Astrocyte of the cerebellum (primary cell): ENCODE measurements at regions of chr16 and their contacts with region 1.

Region 1: DNA sequence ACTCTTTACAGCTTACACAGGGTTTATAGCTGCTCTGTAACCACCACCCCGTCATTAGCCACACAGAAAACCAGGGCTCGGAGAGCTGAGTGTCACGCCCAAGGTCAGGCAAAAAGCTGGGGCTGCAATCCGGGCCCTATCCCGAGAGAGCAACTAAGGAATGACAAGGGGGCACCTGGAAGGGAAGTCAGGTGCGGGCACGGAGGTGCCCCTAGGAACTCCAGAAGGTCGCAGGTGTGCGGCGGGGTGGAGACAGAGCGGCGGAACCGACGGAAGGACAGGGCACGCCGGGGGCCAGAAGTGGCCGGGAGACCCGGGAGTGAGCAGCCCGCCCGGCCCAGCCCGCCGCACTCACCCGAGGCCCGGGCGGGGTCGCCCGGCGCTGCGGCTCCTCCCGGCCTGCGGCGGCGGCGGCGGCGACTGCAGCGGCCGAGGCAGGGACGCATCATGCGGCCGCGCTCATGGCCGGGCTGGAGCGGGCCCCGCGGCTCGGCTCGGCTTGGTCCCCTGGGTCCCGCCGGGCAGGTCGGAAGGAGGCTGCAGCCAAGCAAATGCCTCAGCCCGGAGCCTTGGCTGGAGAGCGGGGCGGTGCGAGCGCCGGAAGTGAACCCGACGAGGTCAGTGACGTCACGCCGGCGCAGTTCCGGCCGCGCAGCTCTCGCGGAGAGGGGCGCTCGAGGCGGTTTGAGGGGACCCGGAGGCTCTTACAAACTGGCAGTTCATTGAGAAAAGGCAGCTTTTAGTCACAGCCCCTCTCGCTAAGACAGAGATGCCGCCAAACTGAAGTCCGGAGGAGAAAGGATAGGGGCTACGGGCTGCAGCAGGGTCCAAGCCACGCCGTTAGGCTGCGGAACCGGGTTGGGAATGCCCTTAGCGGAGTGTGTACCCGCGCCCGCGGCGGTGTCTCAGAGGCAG is at the start of gene ZDHHC7:
- DNase-seq: peak; percentile 53
- H3K4me3 ChIP-seq: peak within 1 kb of the TSS; percentile 97
- CTCF ChIP-seq: no peak

Region 2: DNA sequence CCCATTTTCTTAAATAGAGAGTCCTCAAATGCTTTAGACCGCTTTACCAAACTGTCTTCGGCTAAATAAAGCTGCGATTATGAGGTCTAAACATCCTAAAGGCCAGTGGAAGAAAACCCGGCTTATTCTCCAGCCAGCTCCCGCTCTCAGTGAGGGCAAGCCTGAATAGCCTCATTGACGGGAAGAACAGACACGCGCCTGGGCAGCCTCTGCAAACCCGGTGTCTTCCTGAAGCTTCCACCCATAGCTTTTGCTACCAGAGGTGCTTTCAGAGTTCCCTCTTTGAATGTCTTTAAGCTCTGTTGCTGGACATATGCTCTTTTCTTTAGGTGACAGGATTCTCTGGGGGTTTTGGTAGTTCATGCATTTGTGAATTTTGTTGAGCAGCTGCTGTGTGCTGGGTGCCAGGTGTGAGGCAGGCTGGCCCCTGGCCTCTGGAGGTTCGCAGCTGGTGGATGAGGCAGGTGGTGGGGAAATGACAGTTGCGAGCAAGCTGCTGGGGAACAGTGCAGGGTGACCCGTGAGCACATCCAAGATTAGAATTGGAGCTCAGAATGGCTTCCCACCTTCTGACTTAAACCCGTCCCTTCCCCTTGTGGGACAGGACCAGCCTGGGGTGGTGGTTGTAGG is 146.7 kb before region 1 on chr16:
- in situ Hi-C with region 1: no loop called
- DNase-seq: no peak
- H3K4me3 ChIP-seq: no peak overlapping the region
- CTCF ChIP-seq: no peak

Region 3: GRCh38 chr16:85052536-85052935 is 41.3 kb after region 1 on chr16:
- in situ Hi-C with region 1: loop called (anchors 5 kb)
- DNase-seq: peak; percentile 49
- H3K4me3 ChIP-seq: no peak overlapping the region
- CTCF ChIP-seq: no peak

Region 4: GRCh38 chr16:85082173-85083050 is 71.2 kb after region 1 on chr16:
- in situ Hi-C with region 1: no loop called
- DNase-seq: no peak
- H3K4me3 ChIP-seq: no peak overlapping the region
- CTCF ChIP-seq: no peak

Region 5: DNA sequence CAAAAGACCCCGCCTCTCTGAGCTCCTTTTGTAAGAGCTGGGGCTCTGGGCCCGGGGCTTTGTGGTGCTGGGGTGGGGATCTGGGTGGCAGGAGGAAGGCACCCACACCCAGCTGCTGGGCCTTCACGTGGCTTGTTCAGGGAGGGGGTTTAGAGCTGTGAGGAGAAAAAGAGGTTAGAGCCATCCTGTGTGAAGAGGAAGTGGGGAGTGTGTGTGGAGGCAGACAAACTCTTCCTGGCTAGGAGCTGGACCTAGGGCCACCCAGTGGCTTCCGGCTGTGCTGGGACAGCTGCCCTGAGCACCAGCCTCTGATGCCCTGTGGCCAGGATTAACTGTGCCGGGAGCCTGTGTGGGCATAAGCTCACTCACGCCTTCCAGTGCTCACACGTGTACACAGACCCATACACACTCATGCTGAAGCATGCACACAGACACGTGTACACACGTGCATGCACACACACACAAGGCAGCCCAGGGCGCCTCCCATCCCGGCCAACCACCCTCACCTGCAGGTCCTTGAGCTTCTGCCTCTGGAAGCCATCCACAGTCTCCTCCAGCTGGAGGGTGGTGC is 93.7 kb after region 1 on chr16:
- in situ Hi-C with region 1: no loop called
- DNase-seq: no peak
- H3K4me3 ChIP-seq: no peak overlapping the region
- CTCF ChIP-seq: no peak